Ascending aorta (tissue), 2 donors: ENCODE measurements at regions of chr6 and their contacts with region 1.

Region 1: DNA sequence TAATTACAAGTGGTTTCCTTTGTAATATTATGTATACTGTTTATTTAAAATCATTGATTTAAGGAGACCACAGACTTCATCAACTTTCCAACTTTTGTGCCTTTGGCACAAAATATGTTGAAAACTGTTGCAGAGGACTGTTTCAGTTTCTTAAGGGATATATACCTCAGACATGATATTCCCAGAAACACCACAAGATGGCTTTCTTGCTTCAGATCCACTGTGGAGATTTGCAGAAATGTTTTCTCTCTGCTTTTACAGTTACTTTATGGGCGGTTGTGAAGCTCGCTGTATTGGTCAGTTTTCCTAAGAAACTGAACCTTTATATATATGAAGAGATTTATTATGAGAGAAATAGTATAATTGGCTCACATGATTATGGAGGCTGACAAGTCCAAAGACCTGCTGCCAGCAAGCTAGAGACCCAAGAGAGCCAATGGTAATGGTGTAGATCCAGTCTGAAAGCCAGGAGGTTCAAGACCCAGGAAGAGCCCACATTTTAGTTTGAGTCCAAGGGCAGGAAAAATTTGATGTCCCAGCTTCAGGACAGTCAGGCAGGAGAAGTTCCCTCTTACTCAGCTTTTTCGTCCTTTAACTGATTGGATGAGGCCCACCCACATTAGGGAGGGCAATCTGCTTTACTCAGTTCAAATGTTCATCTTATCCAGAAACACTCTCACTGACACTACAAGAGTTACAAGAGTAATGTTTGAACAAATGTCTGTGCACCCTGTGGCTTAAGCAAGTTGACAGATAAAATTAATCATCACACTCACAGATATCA is 12.8 kb downstream of the ME1 start:
- DNase-seq: no peak
- H3K4me3 ChIP-seq: no peak overlapping the region
- H3K27ac ChIP-seq: no peak overlapping the region
- H3K4me1 ChIP-seq: no peaks in the 10 kb centered on the region
- H3K27me3 ChIP-seq: no peaks in the 10 kb centered on the region
- CTCF ChIP-seq: peak; percentile 35 to 68 (median 48)

Region 2: DNA sequence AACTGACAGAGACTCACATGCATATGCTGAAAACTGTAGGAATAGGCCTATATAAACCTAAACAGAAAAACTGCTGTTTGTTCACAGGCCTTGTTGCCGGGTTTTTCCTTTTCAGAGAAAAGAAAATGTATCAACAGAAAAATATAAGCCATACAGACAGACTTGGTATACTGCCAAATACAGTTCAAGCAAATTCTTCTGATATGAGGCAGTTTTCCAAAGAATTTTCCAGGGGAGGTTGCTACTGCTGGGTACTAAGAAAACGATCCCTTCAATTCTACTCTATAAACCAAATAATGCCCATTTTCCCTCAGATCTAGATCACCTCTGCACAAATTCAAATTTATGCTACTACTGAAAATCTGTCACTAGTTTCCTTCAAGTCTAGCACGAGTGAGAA is 46.6 kb before region 1 on chr6:
- intact Hi-C with region 1: no loop called
- DNase-seq: no peak
- H3K4me3 ChIP-seq: no peak overlapping the region
- H3K27ac ChIP-seq: peak overlapping the region in 1 of 2 donors; percentile 37
- H3K4me1 ChIP-seq: peaks cover 0 to 6% of the 10 kb centered on the region in 2 donors
- H3K27me3 ChIP-seq: no peaks in the 10 kb centered on the region
- CTCF ChIP-seq: no peak

Region 3: DNA sequence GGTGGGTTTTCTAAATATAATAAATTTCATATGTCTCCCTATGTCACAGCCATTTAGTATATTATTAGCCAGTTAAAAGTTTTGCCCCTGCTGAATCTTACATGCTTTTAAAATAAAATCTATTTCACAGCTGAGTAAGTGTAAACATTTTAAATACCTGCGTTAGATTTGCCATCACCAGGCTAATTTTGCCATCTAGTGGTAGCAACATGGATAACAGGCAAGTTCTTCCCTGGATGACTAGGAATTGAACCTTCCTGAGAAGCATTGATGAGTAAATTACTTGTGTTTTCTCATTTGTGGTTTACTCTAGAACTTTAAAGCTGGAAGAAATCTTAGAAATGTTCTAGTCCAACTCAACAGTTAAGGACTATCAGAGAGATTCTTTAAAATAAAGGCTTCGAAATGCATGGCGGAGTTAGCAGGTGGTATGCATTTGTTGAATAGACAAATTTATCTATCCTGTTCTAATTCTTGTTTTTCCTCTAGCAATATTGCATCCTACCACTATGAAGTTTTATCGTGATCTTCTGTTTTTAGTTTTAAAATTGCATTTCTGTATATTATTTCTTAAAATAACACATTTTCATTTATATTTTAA is 96.9 kb after region 1 on chr6:
- intact Hi-C with region 1: loop called (anchors 1 kb)
- DNase-seq: no peak
- H3K4me3 ChIP-seq: peak overlapping the region in 1 of 2 donors; percentile 4
- H3K27ac ChIP-seq: no peak overlapping the region
- H3K4me1 ChIP-seq: peaks cover 0 to 21% of the 10 kb centered on the region in 2 donors
- H3K27me3 ChIP-seq: no peaks in the 10 kb centered on the region
- CTCF ChIP-seq: peak; percentile 62 to 87 (median 74)

Region 4: DNA sequence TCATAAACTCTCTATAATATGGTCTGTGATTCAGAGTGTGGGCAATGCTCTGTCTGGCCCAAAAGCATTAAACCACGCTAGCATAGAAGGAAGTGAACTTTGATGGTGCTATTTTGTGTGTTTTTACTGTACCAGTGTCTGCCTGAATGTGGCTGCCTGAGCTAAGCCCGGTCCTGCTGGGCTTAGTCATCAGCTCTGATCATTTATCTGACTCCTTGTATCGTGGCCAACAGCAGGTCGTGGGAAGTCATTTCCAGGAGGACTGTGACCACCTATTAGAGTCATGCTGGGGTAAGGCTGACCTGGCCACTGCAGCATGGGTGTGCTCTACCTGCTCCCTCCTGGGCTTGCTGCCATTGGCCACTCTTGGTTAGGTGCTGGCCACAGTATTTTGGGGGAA is 1048.4 kb after region 1 on chr6:
- intact Hi-C with region 1: no loop called
- DNase-seq: peak in 1 of 2 donors; percentile 62
- H3K4me3 ChIP-seq: no peak overlapping the region
- H3K27ac ChIP-seq: no peak overlapping the region
- H3K4me1 ChIP-seq: peaks cover 0 to 7% of the 10 kb centered on the region in 2 donors
- H3K27me3 ChIP-seq: no peaks in the 10 kb centered on the region
- CTCF ChIP-seq: no peak